ENCODE measurements at regions of chr1 and their contacts with region 1.

Region 1: GRCh38 chr1:204763706-204764427 is 78.3 kb upstream of the LRRN2 start:
- DNase-seq: peak; percentile 67 to 81
- ATAC-seq: peak; percentile 94 to 99
- H3K4me3 ChIP-seq: no peak overlapping the region
- H3K27ac ChIP-seq: peak overlapping the region; percentile 15 to 63; a peak in 3 of 6 replicates
- H3K4me1 ChIP-seq: peaks cover 10% of the 10 kb centered on the region; the same call in 2 of the 3 replicates
- CTCF ChIP-seq: peak; percentile 92
- EP300 ChIP-seq: no peak
- POLR2A ChIP-seq: no peak
- RAD21 ChIP-seq: peak; percentile 91 to 92

Region 2: GRCh38 chr1:204607910-204608309 is 156.0 kb before region 1 on chr1:
- CTCF ChIA-PET with region 1: interaction called, 15 read pairs
- POLR2A ChIA-PET with region 1: no interaction called
- DNase-seq: no peak
- ATAC-seq: no peak
- H3K4me3 ChIP-seq: no peak overlapping the region
- H3K27ac ChIP-seq: no peak overlapping the region
- H3K4me1 ChIP-seq: no peaks in the 10 kb centered on the region
- CTCF ChIP-seq: no peak
- EP300 ChIP-seq: no peak
- POLR2A ChIP-seq: no peak
- RAD21 ChIP-seq: no peak

Region 3: DNA sequence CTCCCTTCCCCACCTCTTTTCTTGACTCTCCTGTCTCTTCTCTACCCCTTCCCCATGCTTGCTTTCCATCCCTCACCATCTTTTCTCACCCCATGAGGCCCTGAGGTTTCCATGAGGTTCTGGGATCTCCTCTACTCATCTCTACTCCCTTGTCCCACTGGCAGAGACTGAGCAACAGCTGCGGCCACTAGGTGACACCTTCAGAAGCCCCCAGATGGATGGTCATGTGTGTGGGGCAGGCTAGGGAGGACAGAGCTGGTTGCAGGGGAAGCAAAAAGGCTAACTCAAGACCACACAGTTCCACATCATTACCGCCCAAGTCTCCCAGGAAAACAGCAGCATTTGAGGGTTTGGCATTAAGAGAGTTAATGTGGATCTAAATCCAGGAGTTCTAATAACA is 123.3 kb before region 1 on chr1:
- CTCF ChIA-PET with region 1: interaction called, 16 read pairs
- POLR2A ChIA-PET with region 1: no interaction called
- DNase-seq: no peak
- ATAC-seq: no peak
- H3K4me3 ChIP-seq: no peak overlapping the region
- H3K27ac ChIP-seq: no peak overlapping the region
- H3K4me1 ChIP-seq: no peaks in the 10 kb centered on the region
- CTCF ChIP-seq: no peak
- EP300 ChIP-seq: no peak
- POLR2A ChIP-seq: no peak
- RAD21 ChIP-seq: no peak

Region 4: DNA sequence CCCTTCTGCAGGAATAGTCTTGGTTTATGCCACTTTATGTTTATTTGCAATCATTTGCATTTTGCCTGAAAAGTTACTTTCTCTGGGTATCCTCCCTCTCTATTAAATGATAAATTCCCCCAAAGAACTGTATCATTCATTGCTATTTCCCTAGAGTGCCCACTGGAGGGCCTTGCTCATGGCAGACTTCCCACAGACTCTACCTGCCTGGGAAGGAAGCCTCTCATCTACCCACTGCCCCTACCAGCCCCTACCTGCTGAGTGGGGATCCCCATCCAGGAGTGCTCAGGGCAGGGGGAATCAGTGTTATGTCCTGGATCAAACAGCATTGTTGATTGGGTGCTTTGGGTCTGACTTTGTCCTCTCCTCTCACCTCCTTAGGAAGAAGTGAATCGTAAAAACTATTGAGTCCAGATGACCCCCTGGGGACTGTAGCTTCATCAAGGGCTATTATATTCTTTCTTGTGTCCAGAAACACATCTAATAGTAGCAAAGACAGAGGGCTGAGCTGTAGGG is 71.5 kb before region 1 on chr1:
- CTCF ChIA-PET with region 1: interaction called, 35 read pairs
- POLR2A ChIA-PET with region 1: no interaction called
- DNase-seq: peak in 1 of 2 experiments; percentile 27
- ATAC-seq: peak; percentile 60 to 79; a peak in 3 of 6 replicates
- H3K4me3 ChIP-seq: no peak overlapping the region
- H3K27ac ChIP-seq: no peak overlapping the region
- H3K4me1 ChIP-seq: peaks cover 11% of the 10 kb centered on the region
- CTCF ChIP-seq: peak; percentile 26; the same call in 1 of the 3 replicates
- EP300 ChIP-seq: no peak
- POLR2A ChIP-seq: no peak
- RAD21 ChIP-seq: peak; percentile 29 to 44; a peak in 4 of 5 replicates

Region 5: DNA sequence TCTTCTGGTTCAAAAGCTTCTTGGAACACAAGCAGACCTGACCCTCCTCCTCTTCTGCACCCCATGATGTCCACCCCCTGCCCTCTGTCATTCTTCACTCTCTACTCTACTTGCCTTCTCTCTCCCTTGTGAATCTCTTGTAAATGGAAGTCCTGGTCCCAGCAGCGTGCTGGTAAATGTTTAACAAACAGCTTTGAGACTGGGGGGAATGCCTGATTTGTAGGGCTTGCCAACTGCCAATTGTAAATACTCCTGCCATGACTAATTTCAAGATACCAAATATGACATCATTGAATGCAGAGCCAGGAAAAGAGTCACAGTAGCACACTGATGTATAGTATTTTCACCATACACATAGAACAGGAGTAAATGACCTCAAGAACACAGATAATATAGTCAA is 37.4 kb before region 1 on chr1:
- CTCF ChIA-PET with region 1: interaction called, 12 read pairs
- POLR2A ChIA-PET with region 1: no interaction called
- DNase-seq: peak; percentile 90 to 96
- ATAC-seq: peak; percentile 87 to 90
- H3K4me3 ChIP-seq: 0 out of 3 replicates have a peak overlapping the region, but pooled peaks have one; percentile 6
- H3K27ac ChIP-seq: peak overlapping the region; percentile 45 to 82; a peak in 5 of 6 replicates
- H3K4me1 ChIP-seq: peaks cover 48% of the 10 kb centered on the region
- CTCF ChIP-seq: no peak
- EP300 ChIP-seq: no peak
- POLR2A ChIP-seq: no peak
- RAD21 ChIP-seq: no peak

Region 6: GRCh38 chr1:204751894-204752687 is 11.8 kb before region 1 on chr1:
- CTCF ChIA-PET with region 1: interaction called, 81 read pairs
- POLR2A ChIA-PET with region 1: interaction called, 4 read pairs
- DNase-seq: peak; percentile 46 to 85
- ATAC-seq: peak; percentile 94 to 100
- H3K4me3 ChIP-seq: peak overlapping the region; percentile 37
- H3K27ac ChIP-seq: peak overlapping the region; percentile 59 to 83
- H3K4me1 ChIP-seq: peaks cover 14% of the 10 kb centered on the region
- CTCF ChIP-seq: peak; percentile 46
- EP300 ChIP-seq: no peak
- POLR2A ChIP-seq: peak; percentile 23; the same call in 1 of the 2 replicates
- RAD21 ChIP-seq: peak; percentile 34 to 57; a peak in 4 of 5 replicates

Region 7: DNA sequence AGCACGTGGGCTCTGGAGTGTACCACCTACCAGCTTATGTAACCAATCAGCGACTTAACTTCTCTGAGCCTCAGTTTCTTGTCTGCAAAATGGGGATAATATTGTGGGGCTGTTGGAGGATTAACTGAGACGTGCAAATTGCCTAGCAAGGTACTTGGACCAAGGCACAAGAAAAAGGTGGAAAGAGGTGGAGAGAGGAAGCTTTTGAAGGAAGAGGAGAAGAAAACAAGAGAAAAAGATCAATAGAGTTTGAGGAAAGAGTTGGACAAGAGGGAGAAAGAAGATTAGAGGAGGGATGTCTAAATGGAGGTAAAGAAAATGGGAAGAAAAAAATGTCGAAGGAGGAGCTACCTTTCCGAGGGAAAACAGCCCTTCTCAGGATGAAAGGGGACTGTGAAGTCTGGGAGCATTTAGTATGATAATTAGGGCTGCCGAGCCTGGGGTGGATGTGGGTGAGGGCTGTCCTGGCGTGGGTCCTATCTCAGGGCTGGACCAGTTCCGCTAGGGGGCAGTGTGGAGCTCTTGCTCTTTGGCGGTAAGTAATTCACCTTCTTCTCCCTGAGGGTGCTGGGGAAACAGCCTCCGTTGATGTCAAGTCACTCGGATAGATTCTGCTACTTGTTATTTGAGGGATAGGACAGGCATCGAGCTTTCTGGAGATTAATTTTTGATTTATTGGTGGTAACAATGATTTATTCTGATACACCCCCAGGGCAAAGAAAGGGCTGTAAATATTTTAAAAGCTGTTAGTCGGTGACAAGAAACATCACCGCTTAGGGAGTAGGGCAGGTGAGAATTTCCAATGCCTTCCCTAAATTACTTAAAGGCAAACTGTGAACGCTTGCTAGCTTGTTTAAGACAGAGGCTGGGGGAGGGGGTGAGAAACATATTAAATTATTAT is 27.8 kb after region 1 on chr1:
- CTCF ChIA-PET with region 1: interaction called, 16 read pairs
- POLR2A ChIA-PET with region 1: no interaction called
- DNase-seq: peak; percentile 75 to 79
- ATAC-seq: peak; percentile 91 to 97
- H3K4me3 ChIP-seq: no peak overlapping the region
- H3K27ac ChIP-seq: no peak overlapping the region
- H3K4me1 ChIP-seq: no peaks in the 10 kb centered on the region
- CTCF ChIP-seq: peak; percentile 84
- EP300 ChIP-seq: no peak
- POLR2A ChIP-seq: no peak
- RAD21 ChIP-seq: peak; percentile 24 to 33; a peak in 2 of 5 replicates

Measured in A549 (cell line).